ENCODE measurements at regions of chr5 and their contacts with region 1.

Region 1: DNA sequence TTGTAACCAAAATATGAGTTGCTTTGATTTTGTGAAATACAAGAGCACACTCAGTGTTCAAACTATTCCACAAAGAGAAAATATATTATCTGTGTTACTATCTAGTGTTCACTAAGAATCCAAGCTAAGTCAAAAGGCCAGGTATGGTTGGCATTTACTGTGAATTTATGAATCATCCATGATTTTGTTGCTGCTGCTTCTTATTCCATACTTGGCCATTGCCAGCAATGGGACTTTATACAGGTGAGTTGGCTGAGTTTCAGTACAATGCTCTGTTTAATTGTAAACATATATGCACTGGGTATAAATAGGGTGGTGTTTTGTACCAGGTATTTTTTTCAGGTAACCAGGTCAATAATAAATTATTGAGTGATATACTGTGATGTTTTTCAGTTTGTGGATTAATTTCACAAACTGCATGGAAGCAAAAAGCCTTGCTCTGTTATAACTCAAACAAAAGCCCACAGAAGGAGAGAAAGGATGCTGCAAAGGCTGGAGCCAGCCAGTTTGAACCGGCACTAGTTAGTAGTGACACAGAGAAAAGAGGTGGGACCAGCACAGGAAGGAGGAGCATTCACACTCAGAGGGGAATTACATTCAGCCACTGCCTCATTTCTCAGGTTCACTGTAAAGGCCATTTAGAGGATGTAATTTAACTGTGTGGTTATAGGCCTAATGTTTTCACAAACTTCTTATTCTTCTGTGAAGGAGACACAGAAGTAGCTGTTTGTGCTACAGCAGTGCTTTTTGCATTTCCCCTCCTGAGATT is 381.8 kb downstream of the ADGRV1 start:
- DNase-seq: peak; percentile 39
- H3K4me3 Mint-ChIP-seq: no peak overlapping the region
- H3K27ac Mint-ChIP-seq: peak overlapping the region; percentile 82
- H3K4me1 Mint-ChIP-seq: peaks cover 36% of the 10 kb centered on the region
- H3K27me3 Mint-ChIP-seq: no peaks in the 10 kb centered on the region

Region 2: GRCh38 chr5:90386099-90386710 is 554.2 kb before region 1 on chr5:
- intact Hi-C with region 1: no loop called
- DNase-seq: no peak
- H3K4me3 Mint-ChIP-seq: no peak overlapping the region
- H3K27ac Mint-ChIP-seq: no peak overlapping the region
- H3K4me1 Mint-ChIP-seq: peaks cover 6% of the 10 kb centered on the region
- H3K27me3 Mint-ChIP-seq: peaks cover 11% of the 10 kb centered on the region

Region 3: GRCh38 chr5:90873033-90873517 is 67.3 kb before region 1 on chr5:
- intact Hi-C with region 1: loop called (anchors 2 kb)
- DNase-seq: no peak
- H3K4me3 Mint-ChIP-seq: no peak overlapping the region
- H3K27ac Mint-ChIP-seq: peak overlapping the region; percentile 18
- H3K4me1 Mint-ChIP-seq: peaks cover 39% of the 10 kb centered on the region
- H3K27me3 Mint-ChIP-seq: peaks cover 35% of the 10 kb centered on the region

Region 4: GRCh38 chr5:90956511-90957097 is 16.2 kb after region 1 on chr5:
- intact Hi-C with region 1: loop called (anchors 1 kb)
- DNase-seq: no peak
- H3K4me3 Mint-ChIP-seq: peak overlapping the region; percentile 1
- H3K27ac Mint-ChIP-seq: peak overlapping the region; percentile 91
- H3K4me1 Mint-ChIP-seq: peaks cover 22% of the 10 kb centered on the region
- H3K27me3 Mint-ChIP-seq: no peaks in the 10 kb centered on the region

Region 5: GRCh38 chr5:90968319-90968718 is 27.9 kb after region 1 on chr5:
- intact Hi-C with region 1: loop called (anchors 1 kb)
- DNase-seq: no peak
- H3K4me3 Mint-ChIP-seq: no peak overlapping the region
- H3K27ac Mint-ChIP-seq: peak overlapping the region; percentile 63
- H3K4me1 Mint-ChIP-seq: peaks cover 33% of the 10 kb centered on the region
- H3K27me3 Mint-ChIP-seq: no peaks in the 10 kb centered on the region

Region 6: GRCh38 chr5:91011029-91011428 is 70.6 kb after region 1 on chr5:
- intact Hi-C with region 1: loop called (anchors 5 kb)
- DNase-seq: no peak
- H3K4me3 Mint-ChIP-seq: no peak overlapping the region
- H3K27ac Mint-ChIP-seq: no peak overlapping the region
- H3K4me1 Mint-ChIP-seq: peaks cover 4% of the 10 kb centered on the region
- H3K27me3 Mint-ChIP-seq: peaks cover 9% of the 10 kb centered on the region

Region 7: GRCh38 chr5:91170266-91170665 is 229.9 kb after region 1 on chr5:
- intact Hi-C with region 1: loop called (anchors 1 kb)
- DNase-seq: no peak
- H3K4me3 Mint-ChIP-seq: no peak overlapping the region
- H3K27ac Mint-ChIP-seq: peak overlapping the region; percentile 81
- H3K4me1 Mint-ChIP-seq: peaks cover 34% of the 10 kb centered on the region
- H3K27me3 Mint-ChIP-seq: no peaks in the 10 kb centered on the region